B cell (primary cell): ENCODE measurements at regions of chr4 and their contacts with region 1.

Region 1: DNA sequence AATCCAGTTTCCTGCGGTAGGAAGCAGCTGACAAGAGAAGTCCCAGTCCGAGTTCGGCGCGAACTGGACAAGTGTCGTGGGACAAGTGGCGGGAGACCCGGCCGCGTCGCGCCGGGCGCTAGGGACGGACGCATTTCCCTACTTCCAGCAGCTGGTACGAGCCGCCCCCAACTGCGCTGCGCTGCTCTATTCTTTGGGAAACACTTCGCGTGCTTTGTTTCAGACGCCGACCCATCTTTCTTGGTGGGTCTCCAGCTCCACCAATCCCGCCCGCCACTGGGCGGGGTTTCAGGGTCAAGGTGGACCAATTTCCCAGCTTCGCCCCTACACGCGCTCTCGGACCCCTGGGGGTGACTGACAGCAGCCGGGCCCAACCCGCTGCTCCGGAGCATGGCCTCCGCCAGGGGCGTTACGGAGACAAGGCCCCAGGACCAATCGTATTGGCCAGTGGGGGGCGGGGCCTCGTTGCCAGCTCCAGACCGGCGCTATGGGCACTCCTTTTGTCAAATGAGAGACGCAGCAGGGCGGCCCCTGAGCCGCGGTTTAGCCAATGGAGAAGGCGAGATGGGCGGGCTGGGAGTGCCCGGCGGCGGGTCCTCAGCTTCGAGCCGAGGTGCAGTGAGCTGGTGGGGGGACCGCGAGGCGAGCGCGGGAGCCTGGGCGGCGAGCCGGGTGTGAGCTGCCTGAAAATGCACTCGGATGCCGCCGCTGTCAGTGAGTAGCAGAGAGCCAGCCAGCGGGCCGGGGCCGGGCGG is at the start of gene DCUN1D4:
- DNase-seq: peak; percentile 98
- ATAC-seq: peak; percentile 88
- H3K4me3 ChIP-seq: peak within 1 kb of the TSS; percentile 67 to 96 (median 76)
- H3K4me3 Mint-ChIP-seq: peak within 1 kb of the TSS; percentile 94
- H3K27ac ChIP-seq: peak within 1 kb of the TSS; percentile 64 to 81
- H3K27ac Mint-ChIP-seq: peak within 1 kb of the TSS; percentile 95
- H3K4me1 ChIP-seq: peaks cover 9 to 12% of the 10 kb centered on the region in 2 donors
- H3K4me1 Mint-ChIP-seq: peaks cover 11% of the 10 kb centered on the region
- H3K27me3 ChIP-seq: no peaks in the 10 kb centered on the region
- H3K27me3 Mint-ChIP-seq: no peaks in the 10 kb centered on the region
- CTCF ChIP-seq: no peak
- total RNA-seq, gene DCUN1D4: 39.7 and 45.8 TPM in 2 replicates

Region 2: DNA sequence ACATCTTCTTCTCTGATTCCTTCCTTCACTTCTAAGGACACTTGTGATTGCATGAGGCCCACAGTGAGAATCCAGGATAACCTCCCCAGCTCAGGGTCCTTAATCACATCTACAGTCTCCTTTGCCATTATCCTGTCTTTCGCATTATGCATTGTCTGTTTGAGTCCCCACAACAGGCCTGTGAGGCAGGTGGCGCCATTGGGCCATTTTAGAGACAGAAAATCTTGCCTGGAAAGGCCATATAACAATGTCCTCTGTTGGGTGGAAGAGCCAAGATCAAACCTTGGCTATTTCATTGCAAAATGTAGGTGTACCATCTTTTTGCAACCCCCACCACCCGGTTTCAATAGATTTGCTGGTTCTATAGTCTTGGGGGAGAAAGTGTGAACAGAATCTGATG is 11.6 kb before region 1 on chr4:
- CTCF ChIA-PET with region 1: interaction called, 20 read pairs
- POLR2A ChIA-PET with region 1: interaction called, 3 read pairs
- intact Hi-C with region 1: no loop called
- DNase-seq: peak; percentile 61
- ATAC-seq: peak; percentile 49
- H3K4me3 ChIP-seq: no peak overlapping the region
- H3K4me3 Mint-ChIP-seq: no peak overlapping the region
- H3K27ac ChIP-seq: no peak overlapping the region
- H3K27ac Mint-ChIP-seq: no peak overlapping the region
- H3K4me1 ChIP-seq: no peaks in the 10 kb centered on the region
- H3K4me1 Mint-ChIP-seq: no peaks in the 10 kb centered on the region
- H3K27me3 ChIP-seq: peaks cover 0 to 7% (median 0%) of the 10 kb centered on the region in 4 experiments
- H3K27me3 Mint-ChIP-seq: peaks cover 48% of the 10 kb centered on the region
- CTCF ChIP-seq: peak; percentile 69

Region 3: GRCh38 chr4:51885363-51885762 is 42.6 kb after region 1 on chr4:
- CTCF ChIA-PET with region 1: no interaction called
- POLR2A ChIA-PET with region 1: no interaction called
- intact Hi-C with region 1: no loop called
- DNase-seq: peak; percentile 13
- ATAC-seq: no peak
- H3K4me3 ChIP-seq: no peak overlapping the region
- H3K4me3 Mint-ChIP-seq: no peak overlapping the region
- H3K27ac ChIP-seq: no peak overlapping the region
- H3K27ac Mint-ChIP-seq: no peak overlapping the region
- H3K4me1 ChIP-seq: no peaks in the 10 kb centered on the region
- H3K4me1 Mint-ChIP-seq: no peaks in the 10 kb centered on the region
- H3K27me3 ChIP-seq: no peaks in the 10 kb centered on the region
- H3K27me3 Mint-ChIP-seq: no peaks in the 10 kb centered on the region
- CTCF ChIP-seq: peak; percentile 45

Region 4: GRCh38 chr4:51895813-51896408 is 53.2 kb after region 1 on chr4:
- CTCF ChIA-PET with region 1: interaction called, 3 read pairs
- POLR2A ChIA-PET with region 1: no interaction called
- intact Hi-C with region 1: loop called (anchors 5 kb)
- DNase-seq: peak; percentile 61
- ATAC-seq: peak; percentile 89
- H3K4me3 ChIP-seq: no peak overlapping the region
- H3K4me3 Mint-ChIP-seq: no peak overlapping the region
- H3K27ac ChIP-seq: no peak overlapping the region
- H3K27ac Mint-ChIP-seq: no peak overlapping the region
- H3K4me1 ChIP-seq: no peaks in the 10 kb centered on the region
- H3K4me1 Mint-ChIP-seq: peaks cover 3% of the 10 kb centered on the region
- H3K27me3 ChIP-seq: no peaks in the 10 kb centered on the region
- H3K27me3 Mint-ChIP-seq: no peaks in the 10 kb centered on the region
- CTCF ChIP-seq: peak; percentile 83

Region 5: DNA sequence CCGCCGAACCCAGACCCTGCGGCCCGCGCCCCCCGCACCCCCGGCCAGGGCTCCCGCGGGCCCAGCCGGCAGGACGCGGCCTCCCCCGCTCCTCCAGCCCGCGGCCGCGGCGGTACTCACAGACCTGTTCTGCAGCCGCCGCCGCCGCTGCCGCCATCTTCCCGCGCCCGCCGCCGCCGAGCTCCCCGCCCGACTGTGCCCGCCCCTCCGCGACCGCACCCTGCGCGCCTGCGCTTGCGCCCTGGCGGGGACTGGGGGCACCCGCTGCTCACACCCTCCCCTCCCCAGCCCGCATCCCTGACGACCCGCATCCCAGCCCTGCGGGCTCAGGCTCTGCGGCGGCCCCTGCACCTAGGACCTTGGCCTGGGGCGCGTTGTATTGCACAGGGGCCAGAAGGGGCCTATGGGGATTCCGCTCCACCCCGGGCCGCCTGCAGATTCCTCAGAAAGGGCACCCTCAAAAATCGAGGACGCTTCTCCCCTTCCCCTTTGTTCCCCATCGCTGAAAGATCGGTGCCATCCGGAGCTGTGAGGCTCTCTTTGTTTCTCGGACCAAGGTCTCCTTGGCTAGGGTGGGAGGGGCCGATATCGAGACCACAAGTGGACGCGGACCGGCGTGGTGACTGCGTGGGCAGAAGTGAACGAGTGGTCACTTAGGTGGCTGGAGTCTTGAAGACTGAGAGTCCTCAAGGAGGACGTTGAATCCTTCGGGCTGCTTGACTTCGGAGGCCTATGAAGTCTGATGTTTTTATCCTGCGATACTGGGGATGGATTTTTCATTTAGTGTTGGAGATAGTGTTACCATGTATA is 195.6 kb after region 1 on chr4 and contains the start of gene SGCB:
- CTCF ChIA-PET with region 1: no interaction called
- POLR2A ChIA-PET with region 1: interaction called, 4 read pairs
- intact Hi-C with region 1: loop called (anchors 1 kb)
- DNase-seq: peak; percentile 73
- ATAC-seq: peak; percentile 94
- H3K4me3 ChIP-seq: peak within 1 kb of the TSS; percentile 21 to 70 (median 67)
- H3K4me3 Mint-ChIP-seq: peak within 1 kb of the TSS; percentile 84
- H3K27ac ChIP-seq: no peak within 1 kb of the TSS
- H3K27ac Mint-ChIP-seq: peak within 1 kb of the TSS; percentile 71
- H3K4me1 ChIP-seq: peaks cover 11 to 21% of the 10 kb centered on the region in 2 donors
- H3K4me1 Mint-ChIP-seq: peaks cover 29% of the 10 kb centered on the region
- H3K27me3 ChIP-seq: peaks cover 0 to 30% (median 13%) of the 10 kb centered on the region in 4 experiments
- H3K27me3 Mint-ChIP-seq: peaks cover 22% of the 10 kb centered on the region
- CTCF ChIP-seq: no peak
- total RNA-seq, gene SGCB: 9.7 and 12.8 TPM in 2 replicates

Region 6: DNA sequence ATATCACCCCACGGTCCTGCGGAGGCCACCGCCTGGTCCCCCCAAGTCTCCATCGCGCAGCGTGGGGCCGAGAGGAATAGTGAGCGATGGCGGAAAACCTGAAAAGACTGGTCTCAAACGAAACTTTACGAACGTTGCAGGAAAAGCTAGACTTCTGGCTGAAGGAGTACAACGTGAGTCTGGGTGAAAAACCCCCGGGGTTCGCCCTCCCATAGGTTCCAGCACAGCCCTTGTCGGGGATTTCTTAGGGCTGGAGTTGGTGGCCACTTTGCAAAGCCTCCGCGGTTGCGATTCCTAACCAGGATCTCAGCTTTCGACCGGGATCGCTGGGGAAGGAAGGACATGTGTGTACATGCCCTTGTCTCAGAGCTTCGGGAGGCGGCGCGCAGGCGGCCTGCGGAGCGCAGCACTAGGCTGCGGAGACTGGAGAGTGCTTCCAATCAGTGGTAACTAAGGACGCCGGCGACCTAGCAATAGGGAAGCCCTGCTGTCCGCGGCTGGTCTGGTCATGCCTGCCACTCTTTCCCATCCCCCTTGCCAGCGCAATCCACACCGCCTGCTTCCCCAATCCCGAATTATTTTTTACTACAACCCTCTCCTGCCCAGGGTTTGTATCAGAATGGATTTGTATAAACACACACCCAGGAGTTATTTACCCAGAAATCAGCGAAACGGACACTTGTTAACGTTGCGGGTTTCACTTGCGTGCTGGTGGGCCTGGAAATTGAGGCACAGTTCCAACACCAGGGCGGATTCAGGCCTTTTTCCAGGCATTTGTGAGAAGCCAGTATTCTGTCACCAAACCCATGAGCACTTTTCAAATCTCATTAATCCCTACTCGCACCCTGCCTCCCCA is 209.1 kb after region 1 on chr4:
- CTCF ChIA-PET with region 1: no interaction called
- POLR2A ChIA-PET with region 1: no interaction called
- intact Hi-C with region 1: loop called (anchors 1 kb)
- DNase-seq: peak; percentile 33
- ATAC-seq: peak; percentile 35
- H3K4me3 ChIP-seq: peak overlapping the region in 4 of 5 experiments; percentile 25 to 73 (median 53)
- H3K4me3 Mint-ChIP-seq: peak overlapping the region; percentile 81
- H3K27ac ChIP-seq: no peak overlapping the region
- H3K27ac Mint-ChIP-seq: no peak overlapping the region
- H3K4me1 ChIP-seq: peaks cover 18 to 22% of the 10 kb centered on the region in 2 donors
- H3K4me1 Mint-ChIP-seq: peaks cover 29% of the 10 kb centered on the region
- H3K27me3 ChIP-seq: peaks cover 0 to 46% (median 28%) of the 10 kb centered on the region in 4 experiments
- H3K27me3 Mint-ChIP-seq: peaks cover 34% of the 10 kb centered on the region
- CTCF ChIP-seq: no peak

Region 7: GRCh38 chr4:52721968-52722815 is 879.5 kb after region 1 on chr4:
- CTCF ChIA-PET with region 1: no interaction called
- POLR2A ChIA-PET with region 1: no interaction called
- intact Hi-C with region 1: loop called (anchors 1 kb)
- DNase-seq: peak; percentile 96
- ATAC-seq: peak; percentile 92
- H3K4me3 ChIP-seq: peak overlapping the region; percentile 57 to 89 (median 73)
- H3K4me3 Mint-ChIP-seq: peak overlapping the region; percentile 91
- H3K27ac ChIP-seq: peak overlapping the region; percentile 78 to 83
- H3K27ac Mint-ChIP-seq: peak overlapping the region; percentile 92
- H3K4me1 ChIP-seq: peaks cover 4 to 13% of the 10 kb centered on the region in 2 donors
- H3K4me1 Mint-ChIP-seq: peaks cover 16% of the 10 kb centered on the region
- H3K27me3 ChIP-seq: no peaks in the 10 kb centered on the region
- H3K27me3 Mint-ChIP-seq: no peaks in the 10 kb centered on the region
- CTCF ChIP-seq: no peak

Region 8: DNA sequence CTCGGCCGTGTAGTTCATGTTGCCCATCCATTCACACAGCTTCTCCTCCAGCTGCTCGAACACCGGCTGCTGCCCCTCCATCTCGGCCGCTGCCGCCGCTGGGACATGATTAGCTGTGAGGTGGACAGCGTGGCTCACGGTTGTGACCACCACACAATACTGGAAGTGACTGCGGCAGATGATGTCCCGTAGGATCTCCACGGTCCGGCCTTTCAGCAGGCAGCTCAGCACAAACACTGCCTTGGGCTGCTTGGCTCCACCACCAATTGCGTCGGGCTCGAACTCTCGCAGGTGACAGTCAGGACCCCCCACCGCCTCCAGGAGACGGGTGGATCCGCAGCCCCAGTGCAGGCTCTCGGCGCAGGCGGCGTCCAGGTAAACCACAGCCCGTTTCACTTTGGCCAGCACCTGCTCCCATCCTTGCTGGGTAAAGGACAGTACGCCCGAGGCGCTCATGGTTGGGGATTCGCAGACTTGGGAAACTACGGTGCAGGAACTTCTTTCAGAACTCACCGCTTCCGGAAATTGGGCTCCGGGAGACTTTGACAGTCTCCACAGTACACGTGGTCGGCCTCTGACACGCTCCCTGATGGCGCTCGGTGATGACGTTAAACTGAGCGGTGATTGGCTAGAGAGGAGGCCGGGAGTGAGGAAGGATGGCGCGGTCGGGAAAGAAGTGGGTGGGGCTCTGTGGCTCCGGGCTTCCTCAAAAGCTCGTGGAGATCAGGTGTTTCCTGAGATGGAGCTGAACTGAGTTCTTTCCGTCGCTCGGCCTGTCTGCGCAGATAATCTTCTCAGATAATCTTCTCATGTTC is 1523.0 kb after region 1 on chr4 and contains the start of gene SCFD2:
- CTCF ChIA-PET with region 1: no interaction called
- POLR2A ChIA-PET with region 1: no interaction called
- intact Hi-C with region 1: loop called (anchors 2 kb)
- DNase-seq: peak; percentile 97
- ATAC-seq: peak; percentile 98
- H3K4me3 ChIP-seq: peak within 1 kb of the TSS; percentile 82 to 97 (median 91)
- H3K4me3 Mint-ChIP-seq: peak within 1 kb of the TSS; percentile 96
- H3K27ac ChIP-seq: peak within 1 kb of the TSS; percentile 64 to 92
- H3K27ac Mint-ChIP-seq: peak within 1 kb of the TSS; percentile 95
- H3K4me1 ChIP-seq: peaks cover 16 to 21% of the 10 kb centered on the region in 2 donors
- H3K4me1 Mint-ChIP-seq: peaks cover 45% of the 10 kb centered on the region
- H3K27me3 ChIP-seq: peaks cover 0 to 4% (median 1%) of the 10 kb centered on the region in 4 experiments
- H3K27me3 Mint-ChIP-seq: peaks cover 22% of the 10 kb centered on the region
- CTCF ChIP-seq: no peak
- total RNA-seq, gene SCFD2: 20.4 and 20.9 TPM in 2 replicates